ENCODE measurements at regions of chr4 and their contacts with region 1.

Region 1: GRCh38 chr4:78656968-78657445 is 105.4 kb downstream of the ANXA3 start:
- DNase-seq: peak; percentile 26
- ATAC-seq: peak; percentile 44
- H3K4me3 Mint-ChIP-seq: peak overlapping the region; percentile 37
- H3K27ac Mint-ChIP-seq: peak overlapping the region; percentile 79
- H3K4me1 Mint-ChIP-seq: peaks cover 38% of the 10 kb centered on the region
- H3K27me3 Mint-ChIP-seq: peaks cover 2% of the 10 kb centered on the region

Region 2: DNA sequence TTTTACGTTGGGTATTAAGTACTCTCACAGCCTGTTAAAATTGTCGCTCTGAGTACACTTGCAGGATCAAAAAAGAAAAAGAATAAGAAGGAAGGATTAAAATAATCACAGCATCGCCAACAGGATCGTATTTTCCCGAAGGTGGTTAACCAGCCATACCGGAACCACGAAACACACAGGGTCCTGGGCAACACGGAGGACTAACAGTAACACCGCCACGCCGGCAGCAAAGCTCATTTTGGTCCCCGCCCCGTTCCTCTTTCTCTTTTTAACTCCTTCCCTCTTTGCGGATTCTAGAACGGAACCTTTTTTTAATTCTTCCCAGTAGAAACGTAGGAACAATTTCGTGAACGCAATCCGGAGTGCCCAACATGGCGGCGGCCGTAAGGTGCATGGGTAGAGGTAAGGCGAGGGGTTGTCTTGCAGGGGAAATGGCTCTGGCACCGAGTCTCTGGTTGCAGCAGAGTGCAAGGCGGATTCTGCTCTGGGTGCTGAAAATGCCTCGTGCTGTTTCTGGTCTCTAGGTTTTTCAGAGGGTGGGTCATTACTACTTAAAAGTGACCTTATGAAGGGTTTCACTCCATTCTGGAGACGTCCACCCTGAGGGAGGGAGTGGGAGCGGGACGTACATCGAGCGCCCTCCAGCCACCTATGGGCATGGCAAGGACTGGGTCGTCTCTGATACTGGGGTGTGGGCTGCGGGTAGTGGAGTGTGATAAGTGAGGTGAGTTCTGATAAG is 794.4 kb before region 1 on chr4 and contains the start of gene MRPL1:
- CTCF ChIA-PET with region 1: no interaction called
- POLR2A ChIA-PET with region 1: no interaction called
- intact Hi-C with region 1: loop called in 1 of 2 experiments (anchors 2 kb)
- DNase-seq: peak; percentile 92
- ATAC-seq: peak; percentile 78
- H3K4me3 Mint-ChIP-seq: peak within 1 kb of the TSS; percentile 98
- H3K27ac Mint-ChIP-seq: peak within 1 kb of the TSS; percentile 100
- H3K4me1 Mint-ChIP-seq: peaks cover 61% of the 10 kb centered on the region
- H3K27me3 Mint-ChIP-seq: peaks cover 2% of the 10 kb centered on the region
- total RNA-seq, gene MRPL1: 61.1 to 70.6 TPM

Region 3: DNA sequence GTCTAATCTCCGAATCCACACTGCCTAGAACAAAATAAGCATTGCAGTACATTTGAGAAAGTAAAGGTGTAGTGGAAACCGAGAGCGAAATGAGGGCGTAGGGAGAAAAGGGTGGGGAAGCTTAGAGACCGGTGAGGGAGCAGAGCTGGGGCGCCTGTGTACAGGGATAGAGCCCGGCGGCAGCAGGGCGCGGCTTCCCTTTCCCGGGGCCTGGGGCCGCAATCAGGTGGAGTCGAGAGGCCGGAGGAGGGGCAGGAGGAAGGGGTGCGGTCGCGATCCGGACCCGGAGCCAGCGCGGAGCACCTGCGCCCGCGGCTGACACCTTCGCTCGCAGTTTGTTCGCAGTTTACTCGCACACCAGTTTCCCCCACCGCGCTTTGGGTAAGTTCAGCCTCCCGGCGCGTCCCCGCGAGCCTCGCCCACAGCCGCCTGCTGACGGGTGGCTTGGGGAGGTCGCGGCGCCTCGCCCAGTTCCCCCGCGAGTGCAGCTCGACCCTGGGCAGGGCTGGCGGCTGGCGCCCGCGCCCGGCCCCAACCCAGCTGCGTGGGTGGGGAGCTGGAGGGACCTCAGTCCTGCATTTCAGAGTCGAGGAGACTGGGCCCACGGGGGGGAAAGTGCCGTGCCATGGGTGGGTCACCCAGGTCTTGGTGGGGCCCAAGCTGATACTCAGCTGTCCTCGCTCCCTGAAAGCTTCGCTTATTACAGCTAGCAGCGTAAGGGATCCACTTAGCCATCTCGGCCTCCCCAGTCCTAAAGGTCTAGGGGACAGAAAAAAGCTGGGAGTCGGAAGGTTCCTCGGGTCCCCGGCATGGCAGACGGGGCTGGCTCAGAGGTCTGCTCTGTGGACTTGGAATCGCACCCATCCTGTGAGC is 105.3 kb before region 1 on chr4 and contains the start of gene ANXA3:
- CTCF ChIA-PET with region 1: no interaction called
- POLR2A ChIA-PET with region 1: no interaction called
- intact Hi-C with region 1: loop called in 1 of 2 experiments (anchors 5 kb)
- DNase-seq: peak; percentile 47
- ATAC-seq: peak; percentile 47
- H3K4me3 Mint-ChIP-seq: peak within 1 kb of the TSS; percentile 62
- H3K27ac Mint-ChIP-seq: peak within 1 kb of the TSS; percentile 56
- H3K4me1 Mint-ChIP-seq: peaks cover 10% of the 10 kb centered on the region
- H3K27me3 Mint-ChIP-seq: peaks cover 30% of the 10 kb centered on the region
- total RNA-seq, gene ANXA3: 0.49 to 1.0 TPM

Region 4: GRCh38 chr4:78720994-78721677 is 64.1 kb after region 1 on chr4:
- CTCF ChIA-PET with region 1: no interaction called
- POLR2A ChIA-PET with region 1: no interaction called
- intact Hi-C with region 1: loop called in 1 of 2 experiments (anchors 2 kb)
- DNase-seq: peak; percentile 56
- ATAC-seq: peak; percentile 96
- H3K4me3 Mint-ChIP-seq: peak overlapping the region; percentile 14
- H3K27ac Mint-ChIP-seq: peak overlapping the region; percentile 29
- H3K4me1 Mint-ChIP-seq: peaks cover 19% of the 10 kb centered on the region
- H3K27me3 Mint-ChIP-seq: no peaks in the 10 kb centered on the region

Region 5: GRCh38 chr4:78938868-78939666 is 282.1 kb after region 1 on chr4 and contains the start of gene PAQR3:
- CTCF ChIA-PET with region 1: no interaction called
- POLR2A ChIA-PET with region 1: no interaction called
- intact Hi-C with region 1: loop called (anchors 2 to 5 kb)
- DNase-seq: peak; percentile 91
- ATAC-seq: peak; percentile 95
- H3K4me3 Mint-ChIP-seq: peak within 1 kb of the TSS; percentile 88
- H3K27ac Mint-ChIP-seq: peak within 1 kb of the TSS; percentile 83
- H3K4me1 Mint-ChIP-seq: peaks cover 30% of the 10 kb centered on the region
- H3K27me3 Mint-ChIP-seq: peaks cover 8% of the 10 kb centered on the region
- total RNA-seq, gene PAQR3: 7.8 to 8.8 TPM

Region 6: DNA sequence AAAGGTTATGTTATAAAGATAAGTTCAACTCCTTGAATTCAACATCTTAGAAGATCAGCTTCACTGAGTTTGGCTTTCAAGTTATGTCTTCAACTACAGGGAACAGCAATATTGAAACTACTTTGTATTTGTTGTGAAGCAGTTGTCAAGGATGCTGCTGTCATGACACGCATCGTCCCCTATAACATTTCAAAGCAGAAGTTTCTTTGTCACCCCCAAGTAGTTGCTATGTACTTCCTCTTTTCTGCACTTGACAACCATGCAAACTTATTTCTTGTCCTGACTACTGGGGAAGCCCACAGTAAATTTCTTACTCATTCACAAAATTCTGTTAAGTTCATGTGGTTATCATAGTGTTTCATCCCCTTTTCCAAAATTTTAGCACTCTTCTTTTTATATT is 1401.7 kb after region 1 on chr4:
- CTCF ChIA-PET with region 1: no interaction called
- POLR2A ChIA-PET with region 1: no interaction called
- intact Hi-C with region 1: loop called in 1 of 2 experiments (anchors 5 kb)
- DNase-seq: peak; percentile 59
- ATAC-seq: peak; percentile 86
- H3K4me3 Mint-ChIP-seq: peak overlapping the region; percentile 68
- H3K27ac Mint-ChIP-seq: peak overlapping the region; percentile 89
- H3K4me1 Mint-ChIP-seq: peaks cover 54% of the 10 kb centered on the region
- H3K27me3 Mint-ChIP-seq: no peaks in the 10 kb centered on the region

Measured in activated CD4-positive, alpha-beta T cell treated with anti-CD3 and anti-CD28 coated beads for 36 hours (primary cell).